ENCODE measurements at regions of chr1 and their contacts with region 1.

Region 1: GRCh38 chr1:39091845-39092645 is 65.9 kb downstream of the NDUFS5 start:
- DNase-seq: peak; percentile 68
- H3K4me3 Mint-ChIP-seq: no peak overlapping the region
- H3K27ac Mint-ChIP-seq: no peak overlapping the region
- H3K4me1 Mint-ChIP-seq: peaks cover 7% of the 10 kb centered on the region
- H3K27me3 Mint-ChIP-seq: peaks cover 2% of the 10 kb centered on the region

Region 2: DNA sequence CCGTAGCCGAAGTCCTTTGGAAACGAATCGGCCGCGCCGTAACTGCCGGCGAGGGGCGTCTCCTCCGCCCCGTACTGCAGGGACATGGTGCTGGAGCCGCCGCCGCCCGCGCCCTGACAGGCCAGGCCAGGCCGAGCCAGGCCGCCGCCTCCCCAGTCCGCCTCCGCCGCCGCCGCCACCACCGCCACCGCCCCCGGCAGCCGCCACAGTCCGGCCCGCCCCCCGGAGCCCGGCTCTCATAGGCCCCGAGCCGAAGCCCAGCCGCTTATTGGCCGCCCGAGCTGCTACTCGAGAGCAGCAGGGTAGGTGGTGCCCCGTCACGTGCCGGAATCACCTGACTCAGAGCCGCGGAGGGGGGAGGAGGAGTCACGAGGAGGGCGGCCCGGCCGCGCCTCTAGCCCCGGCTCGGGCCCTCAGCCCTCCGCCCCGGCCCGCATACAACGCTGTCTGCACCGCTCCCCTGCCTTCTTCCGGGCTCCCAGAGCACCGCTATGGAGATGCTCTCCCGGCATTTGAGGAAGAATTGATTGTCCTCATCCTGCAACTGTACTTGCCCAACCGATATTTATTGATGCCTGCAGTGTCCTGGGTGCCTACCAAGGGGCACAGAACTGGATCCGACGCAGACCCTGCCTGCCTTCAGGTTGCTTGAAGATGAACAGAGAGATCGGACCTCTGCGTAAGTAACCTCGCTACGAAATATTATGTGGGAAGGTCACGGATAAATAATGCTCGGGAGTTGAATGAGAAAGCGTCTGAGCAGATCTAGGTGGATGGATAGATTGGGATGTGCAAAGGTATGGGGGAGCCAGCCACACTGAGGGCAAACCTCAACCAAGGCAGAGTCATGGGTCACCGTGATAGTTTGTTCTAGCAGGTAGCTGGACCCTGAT is 232.2 kb before region 1 on chr1 and contains the start of gene RRAGC:
- CTCF ChIA-PET with region 1: interaction called, 11 read pairs
- POLR2A ChIA-PET with region 1: no interaction called
- DNase-seq: peak; percentile 99
- H3K4me3 Mint-ChIP-seq: peak within 1 kb of the TSS; percentile 81
- H3K27ac Mint-ChIP-seq: peak within 1 kb of the TSS; percentile 79
- H3K4me1 Mint-ChIP-seq: peaks cover 44% of the 10 kb centered on the region
- H3K27me3 Mint-ChIP-seq: no peaks in the 10 kb centered on the region
- total RNA-seq, gene RRAGC: 20.6 to 21.0 TPM

Region 3: DNA sequence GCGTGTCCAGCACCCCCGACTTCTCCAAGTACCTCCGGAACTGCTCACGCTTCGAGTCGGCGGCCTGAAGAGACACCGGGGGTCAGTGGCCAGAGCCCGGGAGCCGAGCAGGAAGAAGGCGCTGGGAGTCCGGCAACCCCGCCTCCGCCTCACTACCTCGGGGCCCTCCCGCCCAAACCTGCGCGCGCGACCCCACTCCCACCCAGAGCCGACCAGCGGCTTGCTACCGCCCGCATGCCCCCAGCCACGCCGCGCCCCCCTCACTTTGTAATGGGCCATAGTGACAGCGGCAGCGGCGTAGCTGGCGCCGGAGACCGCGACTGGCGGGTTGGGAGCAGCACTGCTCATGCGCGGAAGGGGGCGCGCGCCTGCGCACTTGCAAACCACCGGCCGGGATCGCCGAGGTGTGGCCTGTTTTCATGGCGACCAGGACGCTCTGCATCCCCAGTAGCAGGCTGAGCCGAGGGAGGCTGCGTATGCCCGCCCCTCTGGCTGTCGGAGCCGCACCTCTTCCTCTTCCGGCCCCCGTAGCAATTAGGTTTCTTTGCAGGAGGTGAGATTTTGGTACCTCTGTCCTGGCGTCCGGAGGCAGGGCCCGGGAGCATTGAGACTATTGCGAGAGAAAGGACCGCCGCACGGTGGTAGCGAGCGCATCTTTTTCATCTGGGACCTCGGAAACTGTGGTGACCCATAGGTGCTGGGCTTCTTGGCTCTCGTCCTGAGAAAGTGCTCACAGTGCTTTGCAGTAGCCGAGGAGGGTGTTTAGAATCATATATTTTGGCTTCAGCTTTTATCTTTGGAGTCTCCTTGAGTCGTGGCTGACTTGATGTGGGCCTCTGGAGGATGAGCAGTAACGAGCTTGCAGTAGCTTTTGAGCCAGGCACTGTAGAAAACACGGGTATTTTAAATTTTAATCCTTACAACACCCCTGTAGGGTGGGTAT is 218.7 kb before region 1 on chr1 and contains the start of gene MYCBP:
- CTCF ChIA-PET with region 1: interaction called, 11 read pairs
- POLR2A ChIA-PET with region 1: no interaction called
- DNase-seq: peak; percentile 98
- H3K4me3 Mint-ChIP-seq: peak within 1 kb of the TSS; percentile 92
- H3K27ac Mint-ChIP-seq: peak within 1 kb of the TSS; percentile 81
- H3K4me1 Mint-ChIP-seq: peaks cover 43% of the 10 kb centered on the region
- H3K27me3 Mint-ChIP-seq: no peaks in the 10 kb centered on the region
- total RNA-seq, gene MYCBP: 55.3 to 60.7 TPM

Region 4: GRCh38 chr1:39116868-39117728 is 25.1 kb after region 1 on chr1:
- CTCF ChIA-PET with region 1: no interaction called
- POLR2A ChIA-PET with region 1: no interaction called
- DNase-seq: no peak
- H3K4me3 Mint-ChIP-seq: no peak overlapping the region
- H3K27ac Mint-ChIP-seq: no peak overlapping the region
- H3K4me1 Mint-ChIP-seq: peaks cover 4% of the 10 kb centered on the region
- H3K27me3 Mint-ChIP-seq: no peaks in the 10 kb centered on the region

Region 5: GRCh38 chr1:39666772-39667171 is 574.7 kb after region 1 on chr1:
- CTCF ChIA-PET with region 1: no interaction called
- POLR2A ChIA-PET with region 1: no interaction called
- DNase-seq: peak; percentile 25
- H3K4me3 Mint-ChIP-seq: no peak overlapping the region
- H3K27ac Mint-ChIP-seq: peak overlapping the region; percentile 4
- H3K4me1 Mint-ChIP-seq: peaks cover 21% of the 10 kb centered on the region
- H3K27me3 Mint-ChIP-seq: peaks cover 19% of the 10 kb centered on the region